CD4-positive, alpha-beta T cell (primary cell): ENCODE measurements at regions of chr6 and their contacts with region 1.

Region 1: DNA sequence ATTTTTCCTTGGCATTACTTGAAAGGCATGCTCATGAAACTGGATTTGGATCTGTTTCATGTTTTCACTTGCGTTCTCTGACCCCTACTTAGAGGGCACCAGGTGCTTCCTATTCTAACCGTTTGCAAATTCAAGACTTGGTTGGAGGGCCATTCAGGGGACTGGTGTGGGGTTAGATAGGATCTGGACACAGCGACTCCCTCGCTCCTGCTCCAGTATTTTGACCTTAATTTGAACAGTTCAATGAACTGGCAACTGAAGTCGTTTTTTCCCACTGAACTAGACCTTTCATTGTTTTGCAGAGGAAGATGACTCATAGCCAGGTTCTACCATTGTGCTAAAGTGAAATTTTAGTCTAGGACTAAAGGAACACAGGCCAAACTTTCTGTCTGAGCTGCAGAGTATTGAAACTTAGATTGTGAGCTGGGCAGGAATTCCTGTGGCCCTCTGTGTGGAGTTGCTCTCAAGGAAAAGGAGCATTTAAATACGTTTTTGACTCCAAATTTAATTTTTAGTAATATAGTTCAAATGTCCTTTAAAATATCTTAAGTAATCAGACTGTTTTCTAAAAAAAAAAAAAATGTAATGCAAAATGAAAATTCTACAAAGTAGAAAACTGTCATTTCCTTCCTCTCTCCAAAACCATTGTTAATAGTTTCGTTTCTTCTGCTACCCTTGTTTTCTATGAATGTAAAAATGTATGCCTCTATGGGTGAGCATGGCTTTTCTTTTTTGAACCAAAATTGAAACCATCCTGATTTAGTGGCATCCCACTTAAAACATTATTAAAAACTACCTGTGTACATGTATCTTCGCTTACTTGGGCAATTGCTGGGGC is 64.8 kb downstream of the UTRN start:
- DNase-seq: peak in 4 of 14 experiments; percentile 19 to 71 (median 62)
- ATAC-seq: peak; percentile 65
- H3K4me3 ChIP-seq: peak overlapping the region; percentile 42
- H3K4me3 Mint-ChIP-seq: peak overlapping the region; percentile 85
- H3K27ac ChIP-seq: peak overlapping the region; percentile 81 to 82
- H3K27ac Mint-ChIP-seq: peak overlapping the region; percentile 89
- H3K4me1 ChIP-seq: peaks cover 83% of the 10 kb centered on the region
- H3K4me1 Mint-ChIP-seq: peaks cover 86% of the 10 kb centered on the region
- H3K27me3 ChIP-seq: no peaks in the 10 kb centered on the region
- H3K27me3 Mint-ChIP-seq: no peaks in the 10 kb centered on the region
- CTCF ChIP-seq: no peak

Region 2: GRCh38 chr6:144334131-144334708 is 15.7 kb before region 1 on chr6:
- CTCF ChIA-PET with region 1: interaction called, 4 read pairs
- POLR2A ChIA-PET with region 1: interaction called, 32 read pairs
- intact Hi-C with region 1: loop called in 1 of 2 experiments (anchors 2 kb)
- DNase-seq: peak; percentile 37 to 93 (median 66)
- ATAC-seq: peak; percentile 93
- H3K4me3 ChIP-seq: peak overlapping the region; percentile 55
- H3K4me3 Mint-ChIP-seq: peak overlapping the region; percentile 85
- H3K27ac ChIP-seq: peak overlapping the region; percentile 44 to 75
- H3K27ac Mint-ChIP-seq: peak overlapping the region; percentile 85
- H3K4me1 ChIP-seq: peaks cover 36% of the 10 kb centered on the region
- H3K4me1 Mint-ChIP-seq: peaks cover 64% of the 10 kb centered on the region
- H3K27me3 ChIP-seq: no peaks in the 10 kb centered on the region
- H3K27me3 Mint-ChIP-seq: no peaks in the 10 kb centered on the region
- CTCF ChIP-seq: no peak

Region 3: GRCh38 chr6:144377586-144378210 is 27.8 kb after region 1 on chr6:
- CTCF ChIA-PET with region 1: no interaction called
- POLR2A ChIA-PET with region 1: no interaction called
- intact Hi-C with region 1: loop called in 1 of 2 experiments (anchors 2 kb)
- DNase-seq: no peak
- ATAC-seq: peak; percentile 32
- H3K4me3 ChIP-seq: no peak overlapping the region
- H3K4me3 Mint-ChIP-seq: no peak overlapping the region
- H3K27ac ChIP-seq: no peak overlapping the region
- H3K27ac Mint-ChIP-seq: peak overlapping the region; percentile 31
- H3K4me1 ChIP-seq: peaks cover 20% of the 10 kb centered on the region
- H3K4me1 Mint-ChIP-seq: peaks cover 74% of the 10 kb centered on the region
- H3K27me3 ChIP-seq: no peaks in the 10 kb centered on the region
- H3K27me3 Mint-ChIP-seq: no peaks in the 10 kb centered on the region
- CTCF ChIP-seq: no peak